PC-9 (cell line): ENCODE measurements at regions of chr7 and their contacts with region 1.

Region 1: DNA sequence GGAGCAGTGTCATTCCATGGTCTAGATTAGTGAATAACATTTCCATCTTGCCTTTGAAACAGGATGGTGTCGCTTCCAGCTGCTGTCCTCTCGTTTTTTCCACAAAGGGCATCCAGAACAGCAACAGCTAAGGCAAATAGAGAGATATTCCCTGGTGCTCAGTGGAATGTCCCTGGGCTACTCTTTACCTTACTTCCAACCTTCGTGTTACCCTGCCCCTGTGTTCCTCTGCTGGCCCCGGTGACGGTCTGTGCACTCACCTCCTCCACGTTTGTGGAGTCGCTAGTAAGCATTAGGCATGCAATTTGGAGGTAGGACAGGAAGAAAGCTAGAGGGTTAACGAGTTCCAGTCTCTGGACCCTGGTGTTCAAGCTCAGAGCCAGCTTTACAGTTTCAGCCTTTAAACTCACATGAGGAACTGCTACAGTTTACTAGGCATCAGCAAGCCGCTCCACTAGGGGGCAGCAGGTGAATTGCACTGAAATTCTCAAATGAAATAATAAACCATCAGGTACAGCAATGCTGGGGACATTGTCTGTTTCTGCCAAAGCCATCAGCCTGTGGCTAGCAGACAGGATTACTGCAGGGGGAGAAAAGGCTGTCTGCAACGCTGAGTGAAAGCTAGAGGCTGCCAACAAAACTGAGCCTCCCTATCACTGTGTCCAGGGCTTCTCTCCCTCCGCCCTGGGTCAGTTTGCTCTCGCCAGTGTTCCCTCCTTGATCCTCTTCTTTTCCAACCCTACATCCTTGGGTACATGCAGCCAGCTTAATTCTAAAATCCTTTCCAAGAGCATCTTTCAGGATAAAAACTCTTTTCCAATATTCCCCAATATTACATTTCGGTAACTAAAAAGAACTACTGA is 9.0 kb downstream of the MRPL32 start:
- DNase-seq: peak; percentile 58 to 69
- H3K4me3 ChIP-seq: no peak overlapping the region
- H3K27ac ChIP-seq: no peak overlapping the region
- H3K4me1 ChIP-seq: no peaks in the 10 kb centered on the region
- H3K27me3 ChIP-seq: no peaks in the 10 kb centered on the region
- CTCF ChIP-seq: peak; percentile 98

Region 2: DNA sequence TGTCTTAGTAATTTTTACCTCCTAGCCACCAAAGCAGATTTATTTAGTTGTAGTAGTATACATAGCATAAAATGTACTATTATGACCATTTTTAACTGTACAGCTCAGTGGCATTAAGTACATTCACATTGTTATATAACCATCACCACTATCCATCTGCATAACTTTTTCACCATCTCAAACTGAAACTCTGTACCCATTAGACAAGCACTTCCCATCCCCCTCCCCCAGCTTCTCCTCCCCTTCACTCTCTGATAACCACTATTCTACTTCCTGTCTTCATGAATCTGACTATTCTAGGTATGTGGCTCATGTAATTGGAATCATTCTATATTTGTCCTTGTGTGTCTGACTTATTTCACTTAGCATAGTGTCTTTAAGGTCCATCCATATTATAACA is 62.9 kb after region 1 on chr7:
- CTCF ChIA-PET with region 1: no interaction called
- POLR2A ChIA-PET with region 1: no interaction called
- intact Hi-C with region 1: no loop called
- DNase-seq: no peak
- H3K4me3 ChIP-seq: no peak overlapping the region
- H3K27ac ChIP-seq: no peak overlapping the region
- H3K4me1 ChIP-seq: no peaks in the 10 kb centered on the region
- H3K27me3 ChIP-seq: peaks cover 14% of the 10 kb centered on the region
- CTCF ChIP-seq: no peak

Region 3: GRCh38 chr7:43260980-43261878 is 320.0 kb after region 1 on chr7:
- CTCF ChIA-PET with region 1: no interaction called
- POLR2A ChIA-PET with region 1: no interaction called
- intact Hi-C with region 1: loop called (anchors 1 kb)
- DNase-seq: peak; percentile 56 to 64
- H3K4me3 ChIP-seq: no peak overlapping the region
- H3K27ac ChIP-seq: no peak overlapping the region
- H3K4me1 ChIP-seq: no peaks in the 10 kb centered on the region
- H3K27me3 ChIP-seq: peaks cover 46% of the 10 kb centered on the region
- CTCF ChIP-seq: peak; percentile 99

Region 4: DNA sequence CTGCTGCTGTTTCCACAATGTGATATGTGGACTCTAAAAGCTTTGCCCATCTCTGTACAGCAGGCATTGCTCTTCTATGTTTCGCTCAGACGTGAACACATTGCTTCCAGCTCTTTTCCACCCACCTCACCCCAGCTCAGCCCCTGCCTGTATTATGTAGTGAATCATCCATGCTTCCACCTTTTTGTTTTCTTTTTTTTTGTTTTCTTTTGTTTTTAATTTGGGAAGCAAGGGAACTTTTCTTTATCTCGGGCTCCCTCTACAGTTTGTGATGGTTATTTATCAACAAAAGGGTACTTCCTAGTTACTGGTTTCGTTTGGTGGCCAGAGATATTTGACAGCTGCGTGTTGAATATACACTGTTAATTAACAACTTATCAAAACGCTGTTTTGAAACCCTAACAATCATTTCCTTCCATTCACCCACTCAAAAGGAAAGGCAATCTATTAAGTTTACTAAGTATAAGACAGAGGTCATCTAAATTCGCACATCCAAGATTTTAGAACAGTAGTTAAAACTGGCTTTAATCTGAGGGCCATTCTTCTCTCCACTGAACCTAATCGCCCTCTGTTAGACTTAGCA is 513.8 kb after region 1 on chr7:
- CTCF ChIA-PET with region 1: interaction called, 6 read pairs
- POLR2A ChIA-PET with region 1: no interaction called
- intact Hi-C with region 1: loop called (anchors 5 kb)
- DNase-seq: peak in 1 of 2 experiments; percentile 48
- H3K4me3 ChIP-seq: no peak overlapping the region; the same call in 1 of the 2 replicates
- H3K27ac ChIP-seq: no peak overlapping the region
- H3K4me1 ChIP-seq: no peaks in the 10 kb centered on the region
- H3K27me3 ChIP-seq: peaks cover 49% of the 10 kb centered on the region
- CTCF ChIP-seq: peak; percentile 83